Activated naive CD4-positive, alpha-beta T cell treated with anti-CD3 and anti-CD28 coated beads for 36 hours (primary cell): ENCODE measurements at regions of chr11 and their contacts with region 1.

Region 1: GRCh38 chr11:11787305-11788062 is 54.3 kb upstream of the USP47 start:
- DNase-seq: peak; percentile 83
- H3K4me3 Mint-ChIP-seq: no peak overlapping the region
- H3K27ac Mint-ChIP-seq: no peak overlapping the region
- H3K4me1 Mint-ChIP-seq: no peaks in the 10 kb centered on the region
- H3K27me3 Mint-ChIP-seq: peaks cover 3% of the 10 kb centered on the region

Region 2: DNA sequence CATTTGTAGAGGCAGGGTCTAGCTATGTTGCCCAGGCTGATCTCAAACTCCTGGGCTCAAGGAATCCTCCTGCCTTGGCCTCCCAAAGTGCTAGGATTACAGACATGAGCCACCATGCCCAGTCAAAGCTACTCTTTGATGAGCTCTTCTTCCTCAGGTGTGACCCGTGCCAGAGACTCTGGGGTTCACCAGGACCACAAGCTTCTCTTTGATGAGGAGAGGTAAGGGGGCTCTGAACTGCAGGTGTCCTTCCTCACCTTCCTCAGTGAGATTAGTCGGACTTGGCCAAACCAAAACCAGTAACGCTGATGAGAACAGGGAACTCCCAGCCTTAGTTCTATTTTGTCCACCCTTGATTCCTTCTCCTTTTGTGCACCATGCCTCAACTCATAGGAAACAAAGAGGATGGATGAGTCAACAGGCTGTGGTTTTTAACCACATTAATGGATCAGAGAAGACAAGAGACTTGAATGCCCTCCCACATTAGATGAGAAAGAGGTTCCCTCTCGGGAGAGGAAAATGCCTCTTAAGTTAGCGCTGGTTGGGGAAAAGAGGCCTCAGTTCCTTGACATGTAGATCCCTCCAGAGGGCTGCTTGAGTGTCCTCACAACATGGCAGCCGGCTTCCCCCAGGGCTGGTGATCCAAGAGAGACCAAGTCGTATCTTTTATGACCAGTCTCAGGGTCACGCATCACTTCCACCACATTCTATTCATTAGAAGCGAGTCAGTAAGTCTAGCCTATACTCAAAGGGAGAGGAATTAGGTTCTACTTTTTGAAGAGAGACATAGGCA is 1062.2 kb before region 1 on chr11:
- CTCF ChIA-PET with region 1: no interaction called
- intact Hi-C with region 1: no loop called
- DNase-seq: peak; percentile 43
- H3K4me3 Mint-ChIP-seq: no peak overlapping the region
- H3K27ac Mint-ChIP-seq: peak overlapping the region; percentile 46
- H3K4me1 Mint-ChIP-seq: peaks cover 22% of the 10 kb centered on the region
- H3K27me3 Mint-ChIP-seq: no peaks in the 10 kb centered on the region

Region 3: GRCh38 chr11:11157185-11157584 is 630.3 kb before region 1 on chr11:
- CTCF ChIA-PET with region 1: no interaction called
- intact Hi-C with region 1: loop called (anchors 5 kb)
- DNase-seq: peak; percentile 66
- H3K4me3 Mint-ChIP-seq: no peak overlapping the region
- H3K27ac Mint-ChIP-seq: no peak overlapping the region
- H3K4me1 Mint-ChIP-seq: peaks cover 28% of the 10 kb centered on the region
- H3K27me3 Mint-ChIP-seq: no peaks in the 10 kb centered on the region

Region 4: GRCh38 chr11:11265994-11266606 is 521.4 kb before region 1 on chr11:
- CTCF ChIA-PET with region 1: no interaction called
- intact Hi-C with region 1: loop called (anchors 10 kb)
- DNase-seq: peak; percentile 79
- H3K4me3 Mint-ChIP-seq: no peak overlapping the region
- H3K27ac Mint-ChIP-seq: no peak overlapping the region
- H3K4me1 Mint-ChIP-seq: no peaks in the 10 kb centered on the region
- H3K27me3 Mint-ChIP-seq: no peaks in the 10 kb centered on the region

Region 5: DNA sequence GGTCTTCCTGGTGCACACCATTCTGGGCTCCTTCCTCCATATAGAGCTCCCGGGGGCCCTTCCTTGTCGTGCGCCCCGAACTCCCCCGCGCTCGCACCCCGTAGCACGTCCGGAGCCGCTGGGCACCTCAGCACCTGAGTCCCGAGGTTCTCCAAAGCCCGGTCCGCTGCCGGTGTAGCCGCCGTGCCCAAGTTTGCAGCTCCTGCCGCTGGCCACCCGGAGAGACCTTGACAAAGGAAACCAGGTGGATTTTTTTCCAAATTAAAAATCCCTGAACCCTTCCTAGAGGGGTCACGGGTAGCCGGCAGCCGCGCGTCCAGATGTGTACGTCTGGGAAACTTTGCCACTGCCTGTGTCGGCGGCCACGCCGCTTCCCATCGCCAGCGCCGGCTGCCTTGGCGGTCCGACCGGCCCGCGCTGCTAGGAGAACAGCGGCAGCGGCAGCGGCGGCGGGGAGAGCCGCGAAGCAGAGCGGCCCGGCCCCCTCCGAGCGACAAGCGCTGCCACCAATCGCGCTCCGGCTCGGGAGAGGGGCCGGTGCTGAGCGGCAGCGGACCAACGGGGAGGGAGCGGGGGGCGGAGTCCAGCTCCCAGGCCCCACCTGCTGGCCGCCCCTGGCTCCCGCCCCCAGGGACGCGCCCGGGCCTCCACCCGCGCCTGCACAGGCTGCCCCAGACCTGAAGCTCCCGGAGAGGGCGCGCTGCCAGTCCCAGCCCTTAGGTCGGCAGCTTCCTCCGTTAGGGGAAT is 165.7 kb before region 1 on chr11 and contains the start of gene GALNT18:
- CTCF ChIA-PET with region 1: no interaction called
- intact Hi-C with region 1: loop called (anchors 1 kb)
- DNase-seq: peak; percentile 88
- H3K4me3 Mint-ChIP-seq: peak within 1 kb of the TSS; percentile 74
- H3K27ac Mint-ChIP-seq: no peak within 1 kb of the TSS
- H3K4me1 Mint-ChIP-seq: no peaks in the 10 kb centered on the region
- H3K27me3 Mint-ChIP-seq: peaks cover 48% of the 10 kb centered on the region
- total RNA-seq, gene GALNT18: 4.3 to 4.7 TPM

Region 6: GRCh38 chr11:12008790-12009616 is 221.5 kb after region 1 on chr11:
- CTCF ChIA-PET with region 1: no interaction called
- intact Hi-C with region 1: no loop called
- DNase-seq: no peak
- H3K4me3 Mint-ChIP-seq: peak overlapping the region; percentile 58
- H3K27ac Mint-ChIP-seq: no peak overlapping the region
- H3K4me1 Mint-ChIP-seq: peaks cover 12% of the 10 kb centered on the region
- H3K27me3 Mint-ChIP-seq: peaks cover 67% of the 10 kb centered on the region